Head of caudate nucleus (tissue), 42 donors: ENCODE measurements at regions of chr9 and their contacts with region 1.

Region 1: DNA sequence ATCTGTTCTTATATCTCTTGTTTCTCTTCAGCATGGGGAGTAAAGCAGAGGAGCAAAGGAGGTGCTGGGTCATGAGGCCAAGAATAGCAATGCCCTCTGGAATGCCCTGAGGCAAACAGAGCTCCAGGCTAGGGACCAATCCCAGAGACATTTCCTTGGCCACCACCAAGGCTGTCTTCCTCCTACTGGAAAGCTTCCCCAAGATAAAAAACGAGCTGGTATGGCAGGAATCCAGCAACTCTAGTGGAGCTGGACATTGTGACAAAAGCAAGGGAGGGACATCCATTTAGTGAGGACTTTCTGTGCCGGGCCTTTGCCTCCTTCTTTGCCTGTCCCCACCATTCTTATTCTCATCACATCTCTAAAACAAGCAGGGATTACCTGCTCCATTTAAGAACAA is 161.6 kb downstream of the ASTN2 start:
- DNase-seq: no peak

Region 2: DNA sequence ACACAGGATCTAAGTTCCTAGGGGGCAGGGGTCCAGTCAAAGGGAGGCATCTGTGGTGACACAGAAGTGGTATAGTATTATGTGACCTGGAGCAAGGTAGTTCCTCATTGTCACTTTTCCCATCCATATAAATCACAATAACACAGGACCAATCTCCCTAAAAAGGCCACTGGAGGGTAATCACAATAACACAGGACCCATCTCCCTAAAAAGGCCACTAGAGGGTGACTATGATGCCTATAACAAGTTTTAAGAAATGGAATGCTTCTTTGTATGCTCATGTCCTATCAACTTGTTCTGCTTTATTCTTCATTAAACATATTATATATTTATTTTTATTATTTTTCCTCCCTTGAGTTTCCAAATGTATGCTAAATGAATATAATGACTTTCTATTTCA is 93.0 kb before region 1 on chr9:
- intact Hi-C with region 1: no loop called
- DNase-seq: no peak

Region 3: GRCh38 chr9:117266855-117267497 is 13.7 kb after region 1 on chr9:
- intact Hi-C with region 1: loop called (anchors 2 kb)
- DNase-seq: no peak

Region 4: DNA sequence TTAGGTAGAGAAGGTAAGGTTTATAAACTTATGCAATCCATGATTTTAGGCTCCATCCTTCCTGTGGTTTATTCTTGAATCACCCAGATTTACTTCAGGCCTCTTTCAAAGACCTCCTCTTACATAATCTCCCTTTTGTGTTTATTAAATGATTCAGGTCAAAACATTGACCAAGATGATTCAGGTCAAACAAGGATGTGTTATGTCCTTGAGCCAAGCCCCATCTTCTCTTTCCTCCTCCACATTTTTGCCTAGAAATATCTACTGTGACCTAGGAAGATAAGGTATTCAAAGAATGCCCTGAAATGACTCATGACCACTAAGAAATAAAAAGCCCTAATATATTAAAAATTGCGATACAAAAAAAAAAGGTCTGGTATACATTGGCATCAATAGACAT is 419.1 kb after region 1 on chr9:
- intact Hi-C with region 1: no loop called
- DNase-seq: no peak